ENCODE measurements at regions of chr2 and their contacts with region 1.

Region 1: GRCh38 chr2:166516712-166517303 is 22.8 kb upstream of the SCN7A start:
- DNase-seq: peak in 1 of 2 experiments; percentile 21
- ATAC-seq: peak; percentile 59 to 77; a peak in 3 of 6 replicates
- H3K4me3 ChIP-seq: no peak overlapping the region
- H3K27ac ChIP-seq: no peak overlapping the region
- H3K4me1 ChIP-seq: no peaks in the 10 kb centered on the region
- CTCF ChIP-seq: peak; percentile 53
- EP300 ChIP-seq: no peak
- POLR2A ChIP-seq: no peak
- RAD21 ChIP-seq: peak; percentile 45 to 46; a peak in 3 of 5 replicates

Region 2: GRCh38 chr2:166180951-166181812 is 335.6 kb before region 1 on chr2:
- CTCF ChIA-PET with region 1: interaction called, 18 read pairs
- POLR2A ChIA-PET with region 1: no interaction called
- DNase-seq: peak; percentile 10 to 45
- ATAC-seq: peak; percentile 82 to 95
- H3K4me3 ChIP-seq: no peak overlapping the region
- H3K27ac ChIP-seq: no peak overlapping the region
- H3K4me1 ChIP-seq: no peaks in the 10 kb centered on the region
- CTCF ChIP-seq: peak; percentile 57
- EP300 ChIP-seq: no peak
- POLR2A ChIP-seq: no peak
- RAD21 ChIP-seq: peak; percentile 48 to 57; a peak in 4 of 5 replicates

Region 3: GRCh38 chr2:167140767-167141166 is 624.0 kb after region 1 on chr2:
- CTCF ChIA-PET with region 1: no interaction called
- POLR2A ChIA-PET with region 1: no interaction called
- DNase-seq: peak in 1 of 2 experiments; percentile 47
- ATAC-seq: peak; percentile 55 to 68; a peak in 2 of 6 replicates
- H3K4me3 ChIP-seq: no peak overlapping the region
- H3K27ac ChIP-seq: no peak overlapping the region
- H3K4me1 ChIP-seq: no peaks in the 10 kb centered on the region
- CTCF ChIP-seq: no peak
- EP300 ChIP-seq: no peak
- POLR2A ChIP-seq: no peak
- RAD21 ChIP-seq: no peak